Head of caudate nucleus (tissue), 42 donors: ENCODE measurements at regions of chr3 and their contacts with region 1.

Region 1: DNA sequence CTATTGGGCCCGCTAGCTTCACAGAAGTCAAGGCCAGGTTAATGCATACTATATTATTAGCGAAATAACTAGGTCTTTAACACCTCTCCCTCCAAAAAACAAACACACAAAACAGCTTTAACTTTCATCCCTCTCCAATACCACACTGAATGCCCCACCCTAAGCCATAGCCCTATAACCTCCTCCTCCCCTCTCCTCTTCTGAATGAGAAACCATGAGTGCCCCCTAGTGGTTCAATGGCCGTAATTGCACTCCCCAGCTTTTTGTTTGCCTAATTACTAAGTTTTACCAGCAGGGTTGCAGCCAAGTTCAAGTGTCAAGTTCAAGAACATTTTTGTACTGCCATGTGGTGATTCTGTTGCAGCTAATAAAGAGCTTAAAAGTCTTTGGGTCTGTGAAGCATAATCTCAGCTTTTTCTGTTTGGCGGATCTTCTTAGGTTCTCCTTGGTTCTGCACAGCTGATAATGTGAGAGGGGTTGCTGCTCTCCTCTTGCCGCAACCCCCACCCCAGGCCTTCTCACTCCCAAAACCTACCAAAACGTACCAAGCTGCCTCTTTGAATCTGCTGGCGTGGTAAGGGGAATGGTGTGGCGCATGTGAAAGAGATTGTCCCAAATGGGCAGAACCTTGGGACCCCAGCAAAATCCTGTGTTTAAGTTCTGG is 57.9 kb downstream of the RPL22L1 start:
- DNase-seq: peak in 41 of 42 donors; percentile 25 to 91 (median 77)

Region 2: GRCh38 chr3:170307671-170308403 is 504.2 kb before region 1 on chr3:
- intact Hi-C with region 1: loop called (anchors 10 kb)
- DNase-seq: peak in 1 of 42 donors; percentile 9

Region 3: DNA sequence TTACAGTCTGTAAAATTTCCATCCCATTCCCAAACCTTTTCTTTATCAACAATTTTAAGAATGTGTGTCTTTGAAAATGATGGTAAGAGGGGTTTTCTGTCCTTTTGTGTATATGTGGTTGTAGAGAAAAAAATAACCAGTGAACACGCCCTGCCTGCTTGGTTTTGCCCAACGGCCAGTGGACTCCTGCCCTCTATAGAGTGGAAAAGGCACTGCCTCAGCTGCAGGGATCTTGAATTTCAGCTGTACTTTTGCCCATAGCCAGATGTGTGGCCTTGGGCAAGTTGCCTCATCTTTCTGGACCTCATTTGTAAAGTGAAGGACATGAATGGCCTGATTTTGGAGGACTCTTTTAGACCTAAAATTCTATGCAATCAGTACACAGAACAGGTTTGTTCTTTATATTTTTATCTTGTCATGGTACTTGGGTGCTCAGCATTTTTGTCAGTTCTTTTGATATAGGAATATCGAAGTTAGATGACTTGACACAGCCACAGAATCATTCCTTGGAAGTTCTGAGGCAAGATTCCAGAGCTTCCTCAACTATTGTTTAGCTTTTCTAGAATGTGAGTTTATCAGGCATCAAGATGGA is 312.4 kb before region 1 on chr3:
- intact Hi-C with region 1: no loop called
- DNase-seq: peak in 40 of 42 donors; percentile 21 to 88 (median 65)

Region 4: DNA sequence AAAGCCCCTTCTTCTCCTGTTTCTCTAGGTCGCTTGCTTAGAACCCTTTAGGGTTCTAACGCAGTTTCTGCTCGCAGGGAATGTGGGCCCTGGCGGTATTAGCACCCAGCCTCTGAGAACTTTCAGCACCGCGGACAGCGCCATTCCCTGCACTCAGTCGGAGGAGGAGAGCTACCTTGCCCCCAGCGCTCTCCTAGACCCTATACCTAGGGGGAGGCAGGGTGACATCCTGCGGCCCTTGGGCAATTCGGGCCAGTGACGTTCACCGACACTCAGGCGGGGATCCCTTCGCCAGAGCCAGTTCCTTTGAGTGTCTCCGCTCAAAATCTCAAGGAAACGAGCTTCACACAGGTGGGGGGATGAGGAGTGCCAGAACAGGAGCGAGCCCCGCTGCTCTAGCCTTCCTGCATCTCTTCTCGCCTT is 227.5 kb before region 1 on chr3:
- intact Hi-C with region 1: loop called (anchors 10 kb)
- DNase-seq: peak; percentile 28 to 91 (median 75)

Region 5: DNA sequence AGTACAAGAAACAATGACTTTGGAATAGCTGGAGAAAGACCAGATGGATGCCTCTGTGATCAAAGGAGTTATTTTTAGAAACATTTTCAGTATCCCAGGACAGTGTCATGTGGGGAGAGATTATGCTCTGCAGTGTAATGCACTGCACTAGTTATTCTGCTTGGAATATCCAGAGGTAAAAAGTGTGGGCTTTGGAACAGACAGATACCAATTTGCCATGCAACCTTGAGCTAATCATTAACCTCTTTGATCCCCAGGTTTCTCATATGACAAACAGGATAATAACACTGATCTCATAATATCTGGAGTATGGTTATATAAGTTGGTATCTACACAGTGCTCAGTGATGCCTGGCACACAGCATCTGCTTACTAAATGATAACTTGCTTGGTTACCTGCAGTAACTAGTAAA is 214.0 kb before region 1 on chr3:
- intact Hi-C with region 1: no loop called
- DNase-seq: peak in 1 of 42 donors; percentile 27

Region 6: GRCh38 chr3:171526869-171527268 is 714.8 kb after region 1 on chr3:
- intact Hi-C with region 1: no loop called
- DNase-seq: no peak

Region 7: DNA sequence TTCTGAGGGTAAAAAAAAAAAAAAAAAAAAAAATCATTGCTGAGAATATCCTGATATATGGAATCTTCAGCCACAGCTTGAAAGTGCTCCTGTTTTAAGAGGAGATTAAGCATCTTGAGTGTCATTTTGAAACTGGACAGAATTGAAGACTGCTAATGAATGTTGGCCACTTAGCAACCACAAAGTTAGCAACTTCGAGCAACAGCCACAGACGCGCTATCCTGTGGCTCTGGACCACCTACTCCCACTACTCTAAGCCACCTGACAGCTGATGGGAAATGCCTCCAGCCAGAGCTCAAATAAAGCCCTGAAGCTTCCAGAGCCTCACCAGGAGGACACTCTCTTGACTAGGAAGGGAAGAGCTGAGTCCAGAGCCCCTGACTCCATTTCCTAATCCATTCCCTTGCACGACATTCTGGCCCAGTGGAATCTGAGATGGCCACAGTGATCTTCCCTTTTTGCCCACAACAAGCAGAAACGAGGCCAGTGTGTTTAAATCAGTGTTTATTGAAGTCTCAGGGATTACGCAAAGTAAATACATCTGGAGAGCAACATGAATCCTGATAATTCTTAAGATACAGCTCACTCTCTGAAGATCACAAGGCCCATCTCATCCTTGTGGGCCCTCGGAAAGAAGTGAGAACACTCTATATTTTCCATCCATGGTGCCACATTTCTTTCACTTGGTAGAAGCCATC is 1089.7 kb after region 1 on chr3:
- intact Hi-C with region 1: no loop called
- DNase-seq: no peak